ENCODE measurements at regions of chr18 and their contacts with region 1.

Region 1: DNA sequence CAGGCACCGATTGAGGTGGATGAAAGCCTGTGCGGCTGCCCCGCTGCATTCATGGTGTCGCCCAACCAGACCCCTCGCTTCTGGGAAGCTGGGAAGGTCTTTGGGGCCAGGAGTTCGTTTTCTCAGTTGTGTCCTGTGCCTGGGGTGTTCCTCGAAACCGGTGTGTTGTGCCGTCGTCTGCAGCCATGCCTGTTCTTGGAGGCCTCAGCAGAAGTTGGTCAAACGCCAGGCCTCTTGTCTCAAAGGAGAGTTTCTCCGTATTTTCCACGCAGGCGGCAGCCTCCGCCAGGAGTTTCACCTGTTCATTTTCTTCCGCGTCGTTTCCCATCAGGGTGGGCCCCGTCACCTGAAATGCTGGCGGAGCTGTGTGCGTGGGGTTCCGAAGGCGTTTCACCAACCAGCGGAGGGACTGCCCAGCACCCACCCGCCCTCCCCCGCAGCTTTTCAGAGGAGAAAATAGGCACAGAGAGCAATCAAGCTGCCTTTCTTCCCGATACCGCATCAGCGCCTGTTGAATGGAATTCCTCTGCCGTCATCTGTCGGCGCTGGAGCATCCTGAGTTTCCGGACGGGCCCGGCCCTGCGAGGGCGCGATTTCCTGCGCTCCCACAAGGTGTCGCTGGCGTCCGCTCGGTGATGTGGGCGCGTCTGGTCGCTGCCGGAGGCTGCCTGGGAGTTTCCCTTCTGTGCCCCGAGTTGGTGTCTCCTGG is 17.0 kb upstream of the NFATC1 start:
- DNase-seq: peak; percentile 89
- CTCF ChIP-seq: peak; percentile 97

Region 2: DNA sequence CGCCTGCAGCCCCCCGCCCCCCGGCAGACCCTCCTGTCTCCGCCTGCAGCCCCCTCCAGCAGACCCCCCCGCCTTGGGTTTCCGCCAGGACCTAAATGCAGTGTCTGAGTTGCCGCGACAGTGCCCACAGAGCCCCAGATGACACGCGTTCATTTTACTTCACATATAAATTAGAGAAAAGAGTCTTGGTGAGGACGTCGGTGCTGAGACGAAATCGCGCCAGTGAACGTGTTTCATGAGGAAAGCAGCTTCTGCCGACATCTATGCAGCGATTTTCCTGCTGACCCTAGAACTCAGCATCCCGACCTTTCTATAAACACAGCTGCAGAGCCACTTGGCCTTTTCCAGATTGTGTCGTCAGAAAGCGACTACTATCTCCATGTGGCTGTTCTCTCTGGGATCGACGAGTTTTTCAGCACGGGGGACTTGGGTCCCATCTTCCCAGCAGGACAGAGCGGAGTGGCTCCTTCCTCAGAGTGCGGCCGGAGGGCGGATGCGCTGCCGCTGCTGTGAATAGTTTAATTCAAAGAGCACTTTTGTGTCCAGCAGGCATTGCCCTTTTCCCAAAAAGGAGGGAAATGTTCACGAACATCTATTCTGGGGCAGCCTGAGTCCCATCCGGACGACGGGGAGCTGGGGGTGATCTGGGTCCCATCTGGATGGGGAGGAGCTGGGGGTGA is 153.8 kb after region 1 on chr18:
- in situ Hi-C with region 1: loop called (anchors 10 kb)
- DNase-seq: no peak
- CTCF ChIP-seq: no peak

Region 3: DNA sequence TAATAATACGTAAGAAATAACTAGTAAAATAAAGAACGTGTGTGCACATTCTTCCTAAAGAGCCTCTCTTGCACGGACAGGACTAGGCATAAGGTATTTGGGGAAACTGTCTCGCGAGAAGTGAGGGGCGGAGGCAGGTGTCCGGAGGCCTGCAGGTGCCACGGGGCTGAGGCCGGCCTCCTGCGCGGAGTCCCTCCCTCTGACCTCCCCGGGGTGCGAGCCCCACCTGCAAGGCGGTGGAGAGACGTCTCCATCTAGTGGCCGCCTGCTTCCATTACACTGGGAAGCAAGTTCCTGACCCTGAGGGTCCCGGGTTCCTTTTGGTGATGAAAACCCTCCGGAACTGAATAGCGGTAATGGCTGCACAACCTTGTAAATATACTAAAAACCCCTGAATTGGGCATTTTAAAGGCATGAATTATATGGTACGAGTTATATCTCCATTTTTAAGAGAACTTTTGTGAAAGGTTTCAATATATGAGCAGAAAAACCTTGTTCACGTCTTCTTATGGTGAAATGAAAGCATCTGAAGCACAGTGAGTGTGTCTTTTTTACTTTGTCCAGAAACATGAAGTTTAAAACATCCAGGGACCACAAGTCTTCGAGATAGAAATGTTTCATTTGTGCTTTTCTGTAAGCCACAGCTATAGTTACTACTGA is 265.4 kb after region 1 on chr18:
- in situ Hi-C with region 1: loop called (anchors 10 kb)
- DNase-seq: peak; percentile 91
- CTCF ChIP-seq: peak; percentile 95

Region 4: GRCh38 chr18:79944126-79944741 is 565.5 kb after region 1 on chr18:
- in situ Hi-C with region 1: no loop called
- DNase-seq: peak; percentile 46
- CTCF ChIP-seq: no peak

Measured in GM13977 (cell line).